PC-9 (cell line): ENCODE measurements at regions of chrX and their contacts with region 1.

Region 1: GRCh38 chrX:112857478-112857931 is 16.9 kb upstream of the AMOT start:
- DNase-seq: peak in 1 of 2 experiments; percentile 18
- H3K4me3 ChIP-seq: no peak overlapping the region
- H3K27ac ChIP-seq: no peak overlapping the region
- H3K4me1 ChIP-seq: peaks cover 11% of the 10 kb centered on the region
- H3K27me3 ChIP-seq: no peaks in the 10 kb centered on the region
- CTCF ChIP-seq: no peak

Region 2: DNA sequence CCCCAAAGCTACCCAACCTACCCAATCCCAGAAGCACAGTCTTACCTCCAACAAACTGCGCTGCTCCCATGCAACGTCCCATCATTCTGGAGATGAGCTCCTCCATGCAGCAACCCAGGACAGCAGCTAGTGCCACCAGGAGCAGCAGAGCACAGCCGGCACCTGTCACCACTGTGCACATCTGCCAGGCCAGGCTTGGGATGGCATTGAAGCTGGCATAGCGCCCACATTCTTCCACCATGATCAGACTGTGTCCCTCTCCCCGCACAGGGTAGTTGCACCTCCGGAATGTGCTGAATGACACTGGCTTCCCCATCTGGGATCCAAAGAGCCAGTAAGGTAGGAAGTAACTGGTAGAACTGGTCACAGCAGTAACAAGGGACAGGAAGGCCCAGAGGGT is 186.5 kb before region 1 on chrX:
- CTCF ChIA-PET with region 1: interaction called, 10 read pairs
- POLR2A ChIA-PET with region 1: no interaction called
- intact Hi-C with region 1: no loop called
- DNase-seq: peak in 1 of 2 experiments; percentile 44
- H3K4me3 ChIP-seq: no peak overlapping the region
- H3K27ac ChIP-seq: no peak overlapping the region
- H3K4me1 ChIP-seq: no peaks in the 10 kb centered on the region
- H3K27me3 ChIP-seq: no peaks in the 10 kb centered on the region
- CTCF ChIP-seq: no peak

Region 3: GRCh38 chrX:113545040-113545660 is 687.6 kb after region 1 on chrX:
- CTCF ChIA-PET with region 1: no interaction called
- POLR2A ChIA-PET with region 1: no interaction called
- intact Hi-C with region 1: no loop called
- DNase-seq: no peak
- H3K4me3 ChIP-seq: no peak overlapping the region
- H3K27ac ChIP-seq: no peak overlapping the region
- H3K4me1 ChIP-seq: no peaks in the 10 kb centered on the region
- H3K27me3 ChIP-seq: no peaks in the 10 kb centered on the region
- CTCF ChIP-seq: no peak